Kidney (tissue), 22 donors: ENCODE measurements at regions of chr4 and their contacts with region 1.

Region 1: GRCh38 chr4:151356510-151356909 is 31.1 kb upstream of the SH3D19 start:
- DNase-seq: no peak
- H3K4me3 ChIP-seq: no peak overlapping the region
- H3K27ac ChIP-seq: no peak overlapping the region
- H3K4me1 ChIP-seq: no peaks in the 10 kb centered on the region
- H3K27me3 ChIP-seq: no peaks in the 10 kb centered on the region
- CTCF ChIP-seq: no peak

Region 2: DNA sequence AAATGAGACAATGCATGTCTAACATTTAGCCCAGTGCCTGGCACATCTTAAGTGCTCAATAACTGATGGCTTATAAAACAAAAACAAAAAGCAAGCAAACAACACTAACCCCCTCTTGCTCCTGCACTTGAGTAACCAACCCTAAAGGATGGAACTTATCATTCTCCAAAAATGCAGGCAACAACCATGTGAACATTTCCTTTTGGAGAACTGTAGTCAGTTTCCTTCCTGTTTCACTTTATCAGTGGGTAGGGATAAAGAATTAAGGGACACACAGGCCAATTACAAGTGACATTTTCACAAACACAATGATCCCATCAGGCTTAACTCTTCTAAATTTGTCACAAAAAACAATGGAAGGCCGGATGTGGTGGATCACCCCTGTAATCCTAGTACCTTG is 226.7 kb before region 1 on chr4:
- intact Hi-C with region 1: loop called (anchors 10 kb)
- DNase-seq: no peak
- H3K4me3 ChIP-seq: no peak overlapping the region
- H3K27ac ChIP-seq: no peak overlapping the region
- H3K4me1 ChIP-seq: no peaks in the 10 kb centered on the region
- H3K27me3 ChIP-seq: no peaks in the 10 kb centered on the region
- CTCF ChIP-seq: no peak

Region 3: GRCh38 chr4:151429957-151430570 is 73.6 kb after region 1 on chr4:
- intact Hi-C with region 1: no loop called
- DNase-seq: no peak
- H3K4me3 ChIP-seq: no peak overlapping the region
- H3K27ac ChIP-seq: no peak overlapping the region
- H3K4me1 ChIP-seq: peaks cover 0 to 8% (median 0%) of the 10 kb centered on the region in 3 donors
- H3K27me3 ChIP-seq: no peaks in the 10 kb centered on the region
- CTCF ChIP-seq: no peak